Caco-2 (cell line): ENCODE measurements at regions of chr10 and their contacts with region 1.

Region 1: GRCh38 chr10:114470956-114471905 is 66.9 kb upstream of the AFAP1L2 start:
- DNase-seq: peak; percentile 54 to 71
- H3K4me3 ChIP-seq: no peak overlapping the region
- H3K4me3 Mint-ChIP-seq: no peak overlapping the region
- H3K27ac Mint-ChIP-seq: no peak overlapping the region
- H3K4me1 ChIP-seq: peaks cover 3% of the 10 kb centered on the region; the same call in 1 of the 2 replicates
- H3K4me1 Mint-ChIP-seq: peaks cover 7% of the 10 kb centered on the region
- H3K27me3 ChIP-seq: no peaks in the 10 kb centered on the region
- H3K27me3 Mint-ChIP-seq: no peaks in the 10 kb centered on the region
- CTCF ChIP-seq: peak; percentile 85 to 89

Region 2: DNA sequence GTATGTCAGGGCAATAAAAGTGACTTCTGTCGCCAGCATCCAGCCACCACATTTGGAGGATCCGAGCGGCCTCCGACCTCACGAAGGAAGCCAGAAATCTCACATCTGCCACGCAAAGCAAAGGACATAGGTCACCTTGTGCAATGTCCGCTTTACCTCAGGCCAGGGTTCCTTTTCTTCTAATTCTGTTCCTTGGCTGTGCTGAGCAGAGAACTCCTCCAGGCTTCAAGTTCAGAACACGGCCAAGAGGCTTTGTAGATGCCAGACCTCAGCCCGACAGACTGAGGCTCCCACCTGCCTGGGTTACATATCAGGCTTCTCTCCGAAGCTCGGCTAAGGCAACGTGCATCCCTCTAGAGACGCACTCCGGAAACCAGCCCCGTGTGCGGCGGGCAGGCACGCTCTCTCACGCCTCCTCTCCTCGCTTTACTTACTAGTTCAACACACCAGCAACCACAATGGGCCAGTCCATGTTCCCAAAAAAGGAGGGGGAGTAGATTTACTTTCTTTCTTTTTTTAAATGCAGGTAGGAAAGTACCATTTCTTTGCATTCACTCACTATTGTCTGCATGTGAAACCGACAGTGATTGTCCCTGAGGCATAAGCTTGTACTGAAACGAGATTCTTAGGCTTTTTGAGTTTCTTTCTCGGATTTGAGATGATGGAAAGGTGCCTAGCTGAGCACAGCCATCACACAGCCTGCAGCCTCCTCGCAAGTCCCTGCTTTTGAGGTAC is 55.4 kb after region 1 on chr10:
- CTCF ChIA-PET with region 1: interaction called, 10 read pairs
- POLR2A ChIA-PET with region 1: no interaction called
- intact Hi-C with region 1: loop called (anchors 1 kb)
- DNase-seq: peak; percentile 86 to 93
- H3K4me3 ChIP-seq: peak overlapping the region; percentile 40
- H3K4me3 Mint-ChIP-seq: peak overlapping the region; percentile 98
- H3K27ac Mint-ChIP-seq: peak overlapping the region; percentile 98
- H3K4me1 ChIP-seq: peaks cover 6% of the 10 kb centered on the region
- H3K4me1 Mint-ChIP-seq: peaks cover 13% of the 10 kb centered on the region
- H3K27me3 ChIP-seq: no peaks in the 10 kb centered on the region
- H3K27me3 Mint-ChIP-seq: no peaks in the 10 kb centered on the region
- CTCF ChIP-seq: no peak

Region 3: DNA sequence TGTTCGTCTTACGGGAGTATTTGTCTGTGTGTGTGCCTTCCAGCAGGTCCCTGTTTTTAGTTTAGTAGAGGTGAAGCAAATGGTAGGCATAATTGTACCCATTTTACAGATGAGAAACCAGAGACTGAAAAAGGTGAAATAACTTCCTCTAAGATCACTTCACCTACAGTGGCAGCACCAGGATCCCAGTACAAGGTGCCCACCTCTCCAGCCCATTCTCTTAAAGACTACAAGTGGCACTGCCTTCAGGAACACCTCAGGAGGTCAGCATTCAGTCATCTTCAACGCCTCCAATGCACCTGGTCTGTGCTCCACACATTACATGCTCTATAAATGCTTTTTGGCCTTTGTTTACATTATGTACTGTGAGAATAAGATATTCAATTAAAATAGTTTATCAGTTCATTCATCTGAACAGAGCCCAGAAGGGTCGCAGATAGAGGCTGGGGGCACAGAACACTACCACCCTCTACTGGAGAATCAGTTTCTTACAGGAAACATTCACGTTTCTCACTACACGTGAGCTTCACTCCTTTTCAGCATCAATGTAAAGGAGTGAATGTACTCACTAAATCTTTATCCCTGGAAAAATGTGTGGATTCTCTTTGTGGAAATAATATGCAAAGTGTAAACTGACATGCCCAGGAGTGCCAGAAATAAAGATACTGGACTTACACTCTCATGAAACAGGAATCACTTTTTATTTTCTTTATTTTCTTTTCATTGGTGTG is 232.3 kb after region 1 on chr10:
- CTCF ChIA-PET with region 1: interaction called, 9 read pairs
- POLR2A ChIA-PET with region 1: no interaction called
- intact Hi-C with region 1: loop called (anchors 1 kb)
- DNase-seq: peak in 1 of 2 experiments; percentile 40
- H3K4me3 ChIP-seq: no peak overlapping the region
- H3K4me3 Mint-ChIP-seq: no peak overlapping the region
- H3K27ac Mint-ChIP-seq: no peak overlapping the region
- H3K4me1 ChIP-seq: no peaks in the 10 kb centered on the region
- H3K4me1 Mint-ChIP-seq: no peaks in the 10 kb centered on the region
- H3K27me3 ChIP-seq: no peaks in the 10 kb centered on the region
- H3K27me3 Mint-ChIP-seq: no peaks in the 10 kb centered on the region
- CTCF ChIP-seq: peak; percentile 73 to 83

Region 4: DNA sequence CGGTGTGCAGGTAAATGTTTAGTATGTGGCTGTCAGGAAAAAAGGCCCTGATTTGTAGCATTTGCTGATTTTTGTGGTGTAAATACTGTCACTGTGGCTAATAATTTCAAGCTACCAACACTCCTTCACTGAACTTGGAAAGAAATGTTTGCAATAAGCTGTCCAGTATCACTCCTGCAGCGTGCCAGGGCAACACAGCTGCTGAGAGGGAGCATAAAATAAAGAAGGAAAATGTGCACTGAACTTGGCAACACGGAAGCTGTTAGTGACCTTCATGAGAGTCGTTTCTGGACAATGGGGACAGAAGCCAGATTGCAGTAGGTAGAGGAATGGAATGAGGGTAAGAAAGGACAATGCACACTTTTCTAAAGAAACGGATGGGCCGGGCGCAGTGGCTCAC is 312.5 kb after region 1 on chr10:
- CTCF ChIA-PET with region 1: no interaction called
- POLR2A ChIA-PET with region 1: no interaction called
- intact Hi-C with region 1: loop called (anchors 1 kb)
- DNase-seq: no peak
- H3K4me3 ChIP-seq: no peak overlapping the region
- H3K4me3 Mint-ChIP-seq: no peak overlapping the region
- H3K27ac Mint-ChIP-seq: no peak overlapping the region
- H3K4me1 ChIP-seq: no peaks in the 10 kb centered on the region
- H3K4me1 Mint-ChIP-seq: no peaks in the 10 kb centered on the region
- H3K27me3 ChIP-seq: no peaks in the 10 kb centered on the region
- H3K27me3 Mint-ChIP-seq: peaks cover 2% of the 10 kb centered on the region
- CTCF ChIP-seq: no peak

Region 5: DNA sequence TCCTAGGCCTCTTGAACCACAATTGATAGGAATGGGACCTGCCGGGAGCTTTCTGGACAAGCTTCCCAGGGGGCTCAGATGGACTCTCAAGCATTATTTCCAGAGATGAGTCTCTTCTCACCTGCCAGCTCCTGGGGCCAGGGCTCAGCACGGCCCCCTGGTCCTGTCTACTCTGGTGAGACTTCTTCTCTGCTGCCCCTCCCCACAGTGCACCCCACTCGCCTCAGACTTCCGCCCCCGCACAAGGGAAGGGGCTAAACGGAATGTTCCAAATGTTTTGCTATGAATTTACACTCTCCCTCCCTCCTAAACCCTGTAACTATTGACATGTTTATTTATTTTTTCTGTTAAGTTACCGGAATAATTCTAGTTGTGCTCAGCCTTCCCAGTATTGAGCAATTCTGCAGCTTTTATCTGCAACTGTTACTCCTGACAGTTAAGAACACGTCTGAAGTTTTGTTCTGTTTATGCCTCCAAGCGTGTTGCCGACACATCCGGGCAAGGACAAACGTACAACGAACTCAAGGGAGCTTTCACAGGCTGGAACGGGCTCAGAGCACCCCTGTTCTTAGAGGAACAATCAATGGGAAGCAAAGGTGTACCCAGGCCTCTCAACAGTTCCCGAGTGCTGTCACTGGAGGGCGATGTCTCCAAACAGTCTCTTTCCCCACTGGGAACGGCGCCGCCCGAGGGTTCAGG is 405.5 kb after region 1 on chr10:
- CTCF ChIA-PET with region 1: no interaction called
- POLR2A ChIA-PET with region 1: no interaction called
- intact Hi-C with region 1: loop called (anchors 10 kb)
- DNase-seq: peak; percentile 74 to 76
- H3K4me3 ChIP-seq: no peak overlapping the region
- H3K4me3 Mint-ChIP-seq: no peak overlapping the region
- H3K27ac Mint-ChIP-seq: no peak overlapping the region
- H3K4me1 ChIP-seq: no peaks in the 10 kb centered on the region
- H3K4me1 Mint-ChIP-seq: no peaks in the 10 kb centered on the region
- H3K27me3 ChIP-seq: no peaks in the 10 kb centered on the region
- H3K27me3 Mint-ChIP-seq: peaks cover 5% of the 10 kb centered on the region
- CTCF ChIP-seq: peak; percentile 91 to 93

Region 6: GRCh38 chr10:115129752-115130151 is 658.5 kb after region 1 on chr10:
- CTCF ChIA-PET with region 1: no interaction called
- POLR2A ChIA-PET with region 1: no interaction called
- intact Hi-C with region 1: loop called (anchors 5 kb)
- DNase-seq: peak in 1 of 2 experiments; percentile 3
- H3K4me3 ChIP-seq: no peak overlapping the region
- H3K4me3 Mint-ChIP-seq: no peak overlapping the region
- H3K27ac Mint-ChIP-seq: no peak overlapping the region
- H3K4me1 ChIP-seq: no peaks in the 10 kb centered on the region
- H3K4me1 Mint-ChIP-seq: no peaks in the 10 kb centered on the region
- H3K27me3 ChIP-seq: no peaks in the 10 kb centered on the region
- H3K27me3 Mint-ChIP-seq: peaks cover 5% of the 10 kb centered on the region
- CTCF ChIP-seq: no peak